Ascending aorta (tissue), 2 donors: ENCODE measurements at regions of chrX and their contacts with region 1.

Region 1: GRCh38 chrX:133792198-133792953 is 193.0 kb downstream of the GPC3 start:
- DNase-seq: peak in 1 of 2 donors; percentile 73
- H3K4me3 ChIP-seq: no peak overlapping the region
- H3K27ac ChIP-seq: no peak overlapping the region
- H3K4me1 ChIP-seq: no peaks in the 10 kb centered on the region
- H3K27me3 ChIP-seq: no peaks in the 10 kb centered on the region
- CTCF ChIP-seq: peak; percentile 69 to 91 (median 82)

Region 2: DNA sequence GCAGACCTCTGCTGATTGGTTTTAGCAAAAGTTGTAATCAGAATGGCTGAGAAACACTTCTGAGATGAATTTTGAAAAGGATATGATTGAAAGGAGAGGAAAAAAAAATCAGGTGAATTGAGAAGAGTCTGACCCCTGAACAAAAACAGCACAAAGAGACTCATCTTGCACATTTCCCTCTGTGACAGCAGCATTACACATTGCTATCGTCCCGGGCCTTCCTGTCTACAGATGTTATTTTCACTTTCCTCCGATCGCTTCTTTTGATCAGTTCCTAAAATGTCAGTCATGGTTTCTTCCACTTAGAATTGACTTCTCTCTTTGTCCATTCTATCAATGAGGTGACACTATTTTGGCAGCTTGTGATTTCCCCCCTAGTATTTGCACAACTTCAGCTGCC is 69.6 kb before region 1 on chrX:
- intact Hi-C with region 1: no loop called
- DNase-seq: no peak
- H3K4me3 ChIP-seq: no peak overlapping the region
- H3K27ac ChIP-seq: no peak overlapping the region
- H3K4me1 ChIP-seq: no peaks in the 10 kb centered on the region
- H3K27me3 ChIP-seq: no peaks in the 10 kb centered on the region
- CTCF ChIP-seq: no peak

Region 3: DNA sequence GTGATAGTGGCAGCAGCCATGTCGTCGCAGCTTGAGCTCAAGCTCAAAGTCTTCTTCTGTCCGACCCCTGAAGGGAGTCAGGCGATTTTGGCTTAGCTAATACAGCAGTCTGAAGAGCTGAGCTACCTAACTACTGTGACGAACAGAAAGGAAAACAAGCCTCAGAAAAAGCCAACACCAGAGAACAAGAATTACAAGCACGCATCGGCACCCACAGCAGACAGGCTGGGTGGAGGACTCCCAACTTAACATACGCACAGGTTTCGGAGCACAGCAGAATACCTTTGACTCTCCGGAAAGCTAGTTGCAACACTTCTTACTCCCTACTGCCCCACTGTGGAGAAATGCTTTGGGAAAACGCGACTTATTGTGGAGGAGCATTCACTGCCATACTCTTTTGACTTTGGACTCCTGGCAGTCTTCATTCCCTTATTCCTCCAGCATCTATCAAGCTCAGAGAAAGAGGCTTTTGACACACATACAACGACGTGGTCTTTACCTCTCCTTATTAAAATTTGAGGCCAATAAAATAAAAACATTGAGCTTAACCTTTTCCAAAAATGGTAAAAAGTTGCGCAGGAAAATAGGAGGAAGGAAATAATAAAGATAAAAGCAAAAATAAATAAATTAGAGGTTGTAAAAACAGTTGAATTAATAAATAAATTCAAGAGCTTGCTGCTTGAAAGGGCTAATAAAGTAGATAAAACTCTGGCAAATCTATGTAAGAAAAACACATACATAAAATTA is 234.4 kb after region 1 on chrX:
- intact Hi-C with region 1: loop called (anchors 2 kb)
- DNase-seq: peak in 1 of 2 donors; percentile 66
- H3K4me3 ChIP-seq: peak overlapping the region; percentile 2 to 34
- H3K27ac ChIP-seq: no peak overlapping the region
- H3K4me1 ChIP-seq: no peaks in the 10 kb centered on the region
- H3K27me3 ChIP-seq: no peaks in the 10 kb centered on the region
- CTCF ChIP-seq: peak; percentile 19 to 46 (median 35)

Region 4: DNA sequence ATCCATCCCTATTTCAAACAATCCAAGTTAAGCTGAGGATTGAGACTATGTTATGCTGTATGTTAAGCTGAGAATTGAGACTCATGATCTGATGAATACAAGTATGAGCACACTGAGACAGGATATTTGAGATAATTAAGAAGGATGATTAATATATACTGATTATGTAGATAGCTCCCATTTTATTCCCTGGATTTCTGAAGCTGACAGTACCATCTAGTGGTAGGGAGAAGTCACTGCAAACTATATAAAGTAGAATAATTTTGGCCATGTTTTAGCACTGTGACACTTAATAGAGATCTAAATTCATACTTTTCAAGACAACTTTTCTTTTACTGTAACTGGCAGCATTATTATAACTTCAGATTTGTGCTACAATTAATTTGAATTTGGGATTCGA is 603.8 kb after region 1 on chrX:
- intact Hi-C with region 1: loop called (anchors 5 kb)
- DNase-seq: no peak
- H3K4me3 ChIP-seq: no peak overlapping the region
- H3K27ac ChIP-seq: no peak overlapping the region
- H3K4me1 ChIP-seq: no peaks in the 10 kb centered on the region
- H3K27me3 ChIP-seq: no peaks in the 10 kb centered on the region
- CTCF ChIP-seq: peak in 2 of 3 experiments; percentile 61 to 67